ENCODE measurements at regions of chr3 and their contacts with region 1.

Region 1: DNA sequence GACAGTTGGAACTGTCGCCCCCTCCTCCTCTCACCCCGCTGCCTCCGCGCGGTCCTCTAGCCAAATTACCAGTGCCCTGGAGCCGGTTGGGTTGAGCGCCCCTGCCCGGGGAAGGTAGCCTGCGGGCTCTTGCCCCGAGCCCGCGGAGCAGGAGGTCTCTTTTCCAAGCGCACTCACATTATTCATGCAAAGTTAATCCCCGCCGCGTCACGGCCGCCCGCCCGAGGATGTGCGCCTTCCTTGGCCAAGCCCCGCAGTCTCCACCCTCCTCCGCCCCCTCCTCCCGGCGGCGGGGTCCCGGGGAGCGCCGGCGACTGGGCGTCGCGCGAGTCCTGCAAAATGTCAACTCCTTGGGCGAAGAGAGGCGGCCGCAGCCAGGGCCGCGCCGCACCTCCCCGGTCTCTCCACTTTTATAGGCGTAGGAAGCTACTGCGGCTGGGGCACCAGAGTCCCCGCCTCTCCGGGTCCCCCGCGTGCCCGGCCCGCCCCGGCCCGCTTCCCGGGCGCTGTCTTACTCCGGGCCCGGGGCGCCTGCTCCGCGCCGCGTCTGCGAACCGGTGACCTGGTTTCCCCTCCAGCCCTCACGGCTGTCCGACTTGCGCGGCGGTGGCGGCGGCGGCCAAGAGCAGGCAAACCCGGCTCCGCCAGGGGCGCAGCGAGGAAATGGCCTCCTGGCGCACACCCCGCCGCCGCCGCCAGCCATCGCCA is at the start of gene THRB:
- DNase-seq: peak; percentile 79 to 88 (median 85)
- ATAC-seq: peak; percentile 62 to 78 (median 76)
- H3K4me3 ChIP-seq: peak within 1 kb of the TSS; percentile 66 to 89 (median 76)
- H3K27ac ChIP-seq: peak within 1 kb of the TSS; percentile 80 to 97 (median 95)
- H3K4me1 ChIP-seq: peaks cover 0 to 42% (median 21%) of the 10 kb centered on the region in 12 donors
- H3K27me3 ChIP-seq: peaks cover 0 to 14% (median 0%) of the 10 kb centered on the region in 9 donors
- CTCF ChIP-seq: peak in 9 of 12 donors; percentile 6 to 60 (median 35)
- POLR2A ChIP-seq: peak in 1 of 2 donors; percentile 55
- total RNA-seq, gene THRB: 14.9 to 28.5 (median 21.6) TPM

Region 2: DNA sequence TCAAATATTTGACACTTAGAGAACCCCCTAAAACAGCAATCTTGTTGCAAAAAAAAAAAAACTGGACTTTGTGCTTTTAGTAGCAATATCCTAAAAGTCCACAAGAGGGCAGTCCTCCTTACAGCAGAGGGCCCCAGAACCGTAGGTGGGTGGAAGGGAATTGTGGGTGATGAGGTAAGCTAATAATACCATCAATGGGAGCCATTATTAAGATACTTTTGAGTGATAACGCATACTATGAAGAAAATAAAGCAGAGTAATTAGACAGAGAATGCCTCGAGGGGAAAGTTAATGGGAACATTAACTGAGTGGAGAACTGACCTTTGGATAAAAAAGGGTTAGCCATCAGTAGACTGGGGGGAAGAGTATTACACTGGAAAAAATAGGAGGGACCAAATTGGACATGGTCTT is 230.0 kb before region 1 on chr3:
- intact Hi-C with region 1: loop called in 9 of 10 experiments (anchors 2 to 10 kb)
- DNase-seq: no peak
- ATAC-seq: peak in 3 of 4 donors; percentile 50 to 63 (median 55)
- H3K4me3 ChIP-seq: no peak overlapping the region
- H3K27ac ChIP-seq: no peak overlapping the region
- H3K4me1 ChIP-seq: peaks cover 0 to 14% (median 5%) of the 10 kb centered on the region in 12 donors
- H3K27me3 ChIP-seq: no peaks in the 10 kb centered on the region
- CTCF ChIP-seq: peak; percentile 62 to 79 (median 71)
- POLR2A ChIP-seq: no peak

Region 3: DNA sequence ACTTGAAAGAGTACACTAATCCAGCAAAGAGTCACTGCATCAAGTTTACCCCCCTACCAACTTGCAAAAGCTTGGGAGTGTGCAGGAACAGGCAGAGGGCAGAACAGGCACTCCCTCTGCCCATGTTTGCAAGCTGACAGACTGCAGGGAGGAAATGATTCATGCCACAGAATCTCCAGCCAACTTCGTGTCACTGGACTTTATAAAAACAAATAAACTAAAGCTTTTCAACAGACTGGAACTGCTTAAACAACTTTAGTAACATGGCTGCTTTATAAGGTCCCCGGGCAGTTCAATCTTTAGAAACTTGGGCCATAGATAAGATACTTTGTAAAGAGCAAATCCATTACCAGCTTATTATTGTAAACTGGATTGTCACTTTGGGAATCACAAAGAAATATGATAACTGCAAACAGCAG is 129.6 kb before region 1 on chr3:
- intact Hi-C with region 1: loop called in 9 of 10 experiments (anchors 2 to 10 kb)
- DNase-seq: peak in 4 of 5 donors; percentile 35 to 57 (median 46)
- ATAC-seq: peak; percentile 76 to 94 (median 93)
- H3K4me3 ChIP-seq: no peak overlapping the region
- H3K27ac ChIP-seq: peak overlapping the region in 9 of 12 donors; percentile 4 to 57 (median 28)
- H3K4me1 ChIP-seq: peaks cover 0 to 38% (median 24%) of the 10 kb centered on the region in 12 donors
- H3K27me3 ChIP-seq: no peaks in the 10 kb centered on the region
- CTCF ChIP-seq: peak in 4 of 12 donors; percentile 25 to 46 (median 40)
- POLR2A ChIP-seq: no peak

Region 4: DNA sequence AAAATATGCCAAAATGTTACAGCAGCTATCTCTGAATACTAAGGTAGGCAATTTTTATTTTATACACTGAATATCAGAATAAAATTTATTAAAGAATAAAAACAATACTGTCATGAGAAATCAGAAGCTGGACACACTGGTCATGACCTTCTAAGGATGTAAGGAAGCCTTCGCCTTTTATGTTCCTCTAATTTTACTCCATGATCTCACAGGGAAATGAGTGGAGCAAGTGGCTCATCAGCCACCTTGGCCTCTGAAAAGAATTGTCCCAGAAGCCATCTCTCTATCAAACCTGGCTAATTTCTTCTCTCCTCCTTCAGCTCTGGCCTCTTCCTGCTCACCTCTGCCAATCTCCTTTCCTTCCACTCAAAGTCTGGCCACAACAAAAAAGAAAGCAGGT is 48.7 kb before region 1 on chr3:
- intact Hi-C with region 1: loop called in 2 of 10 experiments (anchors 5 kb)
- DNase-seq: peak in 2 of 5 donors; percentile 13 to 31
- ATAC-seq: peak; percentile 58 to 82 (median 66)
- H3K4me3 ChIP-seq: peak overlapping the region in 3 of 12 donors; percentile 4 to 20 (median 6)
- H3K27ac ChIP-seq: peak overlapping the region in 6 of 12 donors; percentile 37 to 72 (median 60)
- H3K4me1 ChIP-seq: peaks cover 0 to 26% (median 5%) of the 10 kb centered on the region in 12 donors
- H3K27me3 ChIP-seq: no peaks in the 10 kb centered on the region
- CTCF ChIP-seq: no peak
- POLR2A ChIP-seq: no peak

Region 5: GRCh38 chr3:24521420-24522145 is 26.8 kb after region 1 on chr3:
- intact Hi-C with region 1: loop called in 1 of 10 experiments (anchors 2 kb)
- DNase-seq: peak; percentile 62 to 87 (median 78)
- ATAC-seq: peak; percentile 70 to 97 (median 92)
- H3K4me3 ChIP-seq: peak overlapping the region; percentile 48 to 91 (median 78)
- H3K27ac ChIP-seq: peak overlapping the region; percentile 67 to 91 (median 88)
- H3K4me1 ChIP-seq: peaks cover 0 to 15% (median 10%) of the 10 kb centered on the region in 12 donors
- H3K27me3 ChIP-seq: peaks cover 0 to 23% (median 0%) of the 10 kb centered on the region in 9 donors
- CTCF ChIP-seq: peak in 7 of 12 donors; percentile 6 to 50 (median 38)
- POLR2A ChIP-seq: no peak